Esophagus muscularis mucosa (tissue), 4 donors: ENCODE measurements at regions of chr7 and their contacts with region 1.

Region 1: GRCh38 chr7:35975851-35976454 is 175.1 kb downstream of the SEPTIN7 start:
- DNase-seq: no peak
- H3K4me3 ChIP-seq: no peak overlapping the region
- H3K27ac ChIP-seq: no peak overlapping the region
- H3K4me1 ChIP-seq: peaks cover 0 to 7% (median 3%) of the 10 kb centered on the region in 4 donors
- H3K27me3 ChIP-seq: peaks cover 0 to 13% (median 0%) of the 10 kb centered on the region in 4 donors
- CTCF ChIP-seq: peak; percentile 78 to 89 (median 79)
- EP300 ChIP-seq: no peak
- POLR2A ChIP-seq: no peak

Region 2: DNA sequence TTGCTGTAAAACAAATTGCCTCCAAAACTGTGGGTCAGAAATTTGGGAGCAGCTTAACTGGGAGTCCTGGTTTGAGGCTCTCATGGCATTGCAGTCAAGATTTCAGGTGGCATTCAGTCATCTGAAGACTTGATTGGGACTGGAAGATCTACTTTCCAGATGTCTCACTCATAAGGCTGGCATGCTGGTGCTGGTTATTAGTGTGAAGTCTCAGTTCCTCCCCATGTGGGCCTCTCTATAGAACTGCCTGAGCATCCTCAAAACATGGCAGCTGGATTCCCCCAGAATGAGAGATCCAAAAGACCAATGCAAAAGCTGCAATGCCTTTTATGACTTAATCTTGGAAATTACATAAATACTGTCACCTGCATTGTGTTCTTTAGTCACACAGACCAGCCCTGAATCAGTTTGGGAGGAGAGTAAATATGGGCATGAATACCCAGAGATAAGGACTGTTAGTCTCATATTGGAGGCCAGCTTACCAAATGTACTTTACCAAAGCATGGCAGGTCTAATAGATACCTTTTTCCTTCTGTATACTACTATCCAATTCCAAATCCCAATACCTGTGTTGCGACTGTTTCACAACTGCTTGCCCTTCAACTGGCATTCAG is 274.6 kb before region 1 on chr7:
- intact Hi-C with region 1: loop called (anchors 10 kb)
- DNase-seq: no peak
- H3K4me3 ChIP-seq: no peak overlapping the region
- H3K27ac ChIP-seq: no peak overlapping the region
- H3K4me1 ChIP-seq: peaks cover 0 to 2% (median 0%) of the 10 kb centered on the region in 4 donors
- H3K27me3 ChIP-seq: no peaks in the 10 kb centered on the region
- CTCF ChIP-seq: no peak
- EP300 ChIP-seq: no peak
- POLR2A ChIP-seq: no peak